Uterus (tissue), 4 donors: ENCODE measurements at regions of chr3 and their contacts with region 1.

Region 1: DNA sequence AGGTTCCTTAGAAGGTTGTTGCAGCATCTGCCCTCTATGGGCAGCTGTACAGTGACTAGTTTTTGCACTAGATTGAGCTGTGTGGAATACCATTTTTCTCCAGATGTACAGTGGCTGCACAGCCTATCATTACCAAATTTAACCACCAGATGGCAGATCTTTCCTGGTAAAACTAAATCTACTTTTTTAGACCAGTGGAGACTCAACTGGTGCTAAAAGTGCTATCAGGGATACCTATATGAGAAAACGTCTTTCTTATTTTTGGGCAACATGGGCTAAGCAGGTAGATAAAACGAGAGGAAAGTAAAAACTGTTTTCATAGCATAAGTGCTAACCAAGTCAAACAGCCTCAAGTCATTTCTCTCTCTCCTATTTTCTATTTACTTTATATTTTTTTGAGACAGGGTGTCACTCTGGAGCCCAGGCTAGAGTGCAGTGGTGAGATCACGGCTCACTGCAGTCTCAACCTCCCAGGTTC is 21.2 kb downstream of the IGSF10 start:
- DNase-seq: peak in 1 of 2 donors; percentile 28
- H3K4me3 ChIP-seq: no peak overlapping the region
- H3K27ac ChIP-seq: no peak overlapping the region
- H3K4me1 ChIP-seq: no peaks in the 10 kb centered on the region
- H3K27me3 ChIP-seq: no peaks in the 10 kb centered on the region
- CTCF ChIP-seq: peak; percentile 75 to 85 (median 78)
- POLR2A ChIP-seq: no peak

Region 2: DNA sequence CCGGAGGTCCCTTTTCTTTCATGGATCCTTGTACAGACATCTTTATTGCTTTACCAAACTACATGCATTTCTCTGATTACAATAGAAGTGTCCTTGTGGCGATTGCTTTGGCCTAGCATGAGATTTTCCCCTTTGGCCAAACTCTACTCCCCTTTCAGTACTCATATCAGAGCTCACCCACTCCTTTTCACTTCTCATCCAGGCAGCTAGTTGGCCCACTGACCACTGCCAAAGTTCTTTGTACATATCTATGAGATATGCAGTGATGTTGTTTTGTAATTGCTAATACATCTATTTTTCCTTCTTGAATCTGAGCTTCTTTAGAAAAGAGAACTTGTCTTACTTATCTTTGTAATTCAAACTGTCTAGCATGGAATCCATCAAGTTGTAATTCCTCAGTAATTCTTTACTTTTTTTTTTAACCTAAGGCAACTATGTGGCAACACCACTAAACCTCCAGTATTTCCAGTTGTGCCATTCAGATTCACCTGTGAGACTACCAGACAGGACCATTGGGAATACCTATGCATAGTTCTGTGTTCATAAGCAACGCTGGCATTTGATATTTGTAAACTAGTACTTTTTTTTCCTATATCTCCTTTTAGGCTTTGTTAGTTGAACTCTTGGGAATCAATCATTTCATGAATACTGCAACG is 333.3 kb after region 1 on chr3:
- intact Hi-C with region 1: no loop called
- DNase-seq: no peak
- H3K4me3 ChIP-seq: no peak overlapping the region
- H3K27ac ChIP-seq: no peak overlapping the region
- H3K4me1 ChIP-seq: peaks cover 0 to 5% of the 10 kb centered on the region in 2 donors
- H3K27me3 ChIP-seq: no peaks in the 10 kb centered on the region
- CTCF ChIP-seq: no peak
- POLR2A ChIP-seq: no peak

Region 3: DNA sequence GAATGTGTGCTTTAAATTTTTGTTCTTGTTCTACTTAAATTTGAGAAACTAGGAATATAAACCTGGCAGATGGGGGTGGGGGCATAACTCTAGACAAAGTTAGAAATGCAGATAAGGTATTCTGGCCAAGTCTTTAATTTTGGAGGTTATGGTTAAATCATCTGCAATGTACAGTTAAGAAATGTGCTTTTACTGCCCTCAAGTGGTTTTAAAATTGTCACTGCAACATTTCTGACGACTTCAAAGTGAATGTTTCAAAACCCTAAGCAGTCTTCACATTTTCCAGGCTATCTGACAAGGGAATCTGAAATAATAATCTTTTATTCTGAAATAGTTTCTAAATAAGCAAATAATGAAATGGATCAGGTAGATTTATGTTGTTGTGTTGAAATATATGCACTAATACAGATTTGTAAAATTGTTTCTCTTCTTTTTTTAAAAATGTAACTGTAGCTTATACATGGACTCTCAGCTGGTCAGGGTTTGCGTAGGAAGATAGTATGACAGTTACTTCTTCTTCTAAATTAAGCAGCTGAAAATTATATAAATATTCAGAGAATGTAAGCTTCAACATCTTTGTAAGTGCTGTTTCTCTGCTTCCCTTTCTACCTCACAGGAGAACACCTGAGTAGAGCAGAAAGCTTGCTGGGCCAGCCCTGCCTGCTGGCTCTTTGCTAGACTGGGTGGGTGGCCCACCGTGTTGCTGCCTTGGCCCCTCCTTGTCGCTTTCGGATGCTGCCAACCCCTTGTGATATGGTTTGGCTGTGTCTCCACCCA is 478.8 kb after region 1 on chr3:
- intact Hi-C with region 1: loop called (anchors 10 kb)
- DNase-seq: no peak
- H3K4me3 ChIP-seq: no peak overlapping the region
- H3K27ac ChIP-seq: no peak overlapping the region
- H3K4me1 ChIP-seq: no peaks in the 10 kb centered on the region
- H3K27me3 ChIP-seq: no peaks in the 10 kb centered on the region
- CTCF ChIP-seq: peak; percentile 52 to 70 (median 62)
- POLR2A ChIP-seq: no peak